ENCODE measurements at regions of chr4 and their contacts with region 1.

Region 1: DNA sequence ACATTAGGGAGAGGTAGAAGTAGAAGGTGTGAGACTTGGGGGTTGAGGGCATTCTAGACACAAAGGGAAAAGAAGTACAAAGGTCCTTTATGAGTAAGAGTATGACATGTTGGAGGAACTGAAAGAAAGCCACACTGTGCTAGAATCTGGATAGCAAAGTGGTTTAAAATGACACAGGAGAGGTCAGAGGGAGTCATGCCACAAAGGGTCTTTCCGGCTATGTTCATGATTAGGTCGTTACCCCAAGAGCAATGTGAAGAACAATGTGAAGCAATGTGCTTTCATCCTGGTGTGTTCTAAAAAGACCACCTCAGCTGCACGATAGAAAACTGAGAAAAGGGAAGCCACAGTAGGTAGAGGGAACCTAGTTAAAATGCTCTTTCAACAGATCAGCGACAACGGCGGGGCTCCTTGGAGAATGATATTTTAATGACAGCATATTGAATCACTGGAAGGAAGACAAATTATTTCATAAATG is 29.2 kb downstream of the SMIM14 start:
- DNase-seq: no peak
- H3K4me3 ChIP-seq: no peak overlapping the region
- H3K27ac ChIP-seq: peak overlapping the region; percentile 41; the same call in 1 of the 2 replicates
- H3K4me1 ChIP-seq: peaks cover 44% of the 10 kb centered on the region
- H3K27me3 ChIP-seq: no peaks in the 10 kb centered on the region
- CTCF ChIP-seq: no peak

Region 2: GRCh38 chr4:39037491-39037825 is 572.0 kb before region 1 on chr4:
- CTCF ChIA-PET with region 1: no interaction called
- POLR2A ChIA-PET with region 1: no interaction called
- intact Hi-C with region 1: loop called (anchors 5 kb)
- DNase-seq: peak; percentile 31 to 67
- H3K4me3 ChIP-seq: no peak overlapping the region
- H3K27ac ChIP-seq: peak overlapping the region; percentile 98
- H3K4me1 ChIP-seq: peaks cover 88% of the 10 kb centered on the region
- H3K27me3 ChIP-seq: no peaks in the 10 kb centered on the region
- CTCF ChIP-seq: no peak

Region 3: DNA sequence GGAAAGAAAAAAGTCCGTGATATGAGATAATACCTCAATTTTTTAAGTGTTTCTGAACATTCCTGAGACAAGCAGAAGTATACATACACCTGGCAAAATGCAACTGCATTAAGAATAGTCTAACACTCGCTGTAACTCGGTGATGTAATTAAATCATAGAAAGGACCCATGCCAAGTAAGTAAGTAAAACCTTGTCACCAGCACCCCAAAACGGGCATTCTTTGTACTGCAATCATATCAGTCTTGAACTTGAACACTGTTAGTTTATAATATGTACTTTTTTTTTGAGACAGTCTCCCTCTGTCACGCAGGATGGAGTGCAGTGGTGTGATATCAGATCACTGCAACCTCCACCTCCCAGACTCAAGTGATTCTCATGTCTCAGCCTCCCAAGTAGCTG is 18.2 kb before region 1 on chr4:
- CTCF ChIA-PET with region 1: interaction called, 12 read pairs
- POLR2A ChIA-PET with region 1: no interaction called
- intact Hi-C with region 1: no loop called
- DNase-seq: peak in 1 of 2 experiments; percentile 57
- H3K4me3 ChIP-seq: no peak overlapping the region
- H3K27ac ChIP-seq: no peak overlapping the region
- H3K4me1 ChIP-seq: no peaks in the 10 kb centered on the region
- H3K27me3 ChIP-seq: no peaks in the 10 kb centered on the region
- CTCF ChIP-seq: peak; percentile 58

Region 4: DNA sequence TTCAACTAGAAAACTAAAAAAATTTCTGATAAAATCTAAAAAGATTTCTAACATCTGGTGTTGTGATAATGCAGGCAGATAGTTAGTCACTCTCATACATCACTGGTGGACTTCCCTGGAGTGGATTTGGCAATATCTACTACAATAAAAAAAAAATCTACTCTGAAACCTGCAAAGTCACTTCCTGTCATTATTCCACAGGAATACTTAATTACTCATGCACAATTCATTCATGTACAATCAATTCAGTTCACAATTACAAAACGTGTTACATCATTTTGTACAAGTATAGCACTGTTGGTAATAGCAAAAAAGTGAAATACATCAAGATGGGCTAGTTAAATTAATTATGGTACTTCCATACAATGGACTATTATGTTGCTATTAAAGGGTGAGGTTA is 570.9 kb after region 1 on chr4:
- CTCF ChIA-PET with region 1: no interaction called
- POLR2A ChIA-PET with region 1: no interaction called
- intact Hi-C with region 1: no loop called
- DNase-seq: peak in 1 of 2 experiments; percentile 78
- H3K4me3 ChIP-seq: no peak overlapping the region
- H3K27ac ChIP-seq: peak overlapping the region; percentile 75
- H3K4me1 ChIP-seq: peaks cover 11% of the 10 kb centered on the region
- H3K27me3 ChIP-seq: no peaks in the 10 kb centered on the region
- CTCF ChIP-seq: no peak